Activated naive CD4-positive, alpha-beta T cell treated with anti-CD3 and anti-CD28 coated beads, Interleukin-2, amount 10 ng/mL, durations not matched to agents 7 days and 5 days (primary cell): ENCODE measurements at regions of chr4 and their contacts with region 1.

Region 1: GRCh38 chr4:16916719-16917337 is 18.4 kb upstream of the LDB2 start:
- DNase-seq: peak; percentile 86
- H3K4me3 Mint-ChIP-seq: no peak overlapping the region
- H3K27ac Mint-ChIP-seq: no peak overlapping the region
- H3K4me1 Mint-ChIP-seq: no peaks in the 10 kb centered on the region
- H3K27me3 Mint-ChIP-seq: no peaks in the 10 kb centered on the region

Region 2: DNA sequence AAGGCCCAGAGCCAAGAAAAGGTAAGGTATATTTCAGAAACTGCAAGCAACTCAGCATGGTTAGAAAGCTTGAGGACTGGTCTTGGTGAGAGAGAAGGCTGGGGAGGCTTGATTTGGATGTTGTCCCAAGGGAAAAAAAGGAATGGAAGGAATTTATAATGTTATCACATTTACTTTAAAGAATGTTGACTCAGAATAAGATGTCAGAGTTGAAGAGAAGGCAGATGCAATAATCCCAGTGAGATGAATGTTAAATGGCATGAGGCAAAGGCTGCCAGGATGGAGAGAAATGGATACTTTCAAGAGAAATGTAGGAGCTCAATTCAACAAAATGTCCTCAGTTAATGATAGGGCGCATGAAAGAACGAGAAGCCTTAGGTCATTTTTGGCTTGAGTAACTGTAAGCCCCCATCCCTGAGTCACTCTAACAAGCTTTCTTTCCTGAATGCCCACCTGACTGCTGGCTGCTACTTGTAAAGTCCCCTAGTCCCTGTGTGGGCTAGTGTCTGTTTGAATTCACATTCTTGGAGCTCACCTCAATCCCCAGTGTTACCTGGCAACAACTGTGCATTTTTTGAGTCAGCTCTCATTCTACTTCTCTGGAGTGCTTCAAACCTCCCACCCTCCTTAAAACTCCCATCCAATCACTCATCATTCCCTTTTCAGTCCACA is 587.6 kb before region 1 on chr4:
- CTCF ChIA-PET with region 1: no interaction called
- DNase-seq: no peak
- H3K4me3 Mint-ChIP-seq: no peak overlapping the region
- H3K27ac Mint-ChIP-seq: no peak overlapping the region
- H3K4me1 Mint-ChIP-seq: no peaks in the 10 kb centered on the region
- H3K27me3 Mint-ChIP-seq: no peaks in the 10 kb centered on the region

Region 3: GRCh38 chr4:16705341-16705740 is 211.5 kb before region 1 on chr4:
- CTCF ChIA-PET with region 1: no interaction called
- DNase-seq: no peak
- H3K4me3 Mint-ChIP-seq: no peak overlapping the region
- H3K27ac Mint-ChIP-seq: no peak overlapping the region
- H3K4me1 Mint-ChIP-seq: no peaks in the 10 kb centered on the region
- H3K27me3 Mint-ChIP-seq: no peaks in the 10 kb centered on the region

Region 4: DNA sequence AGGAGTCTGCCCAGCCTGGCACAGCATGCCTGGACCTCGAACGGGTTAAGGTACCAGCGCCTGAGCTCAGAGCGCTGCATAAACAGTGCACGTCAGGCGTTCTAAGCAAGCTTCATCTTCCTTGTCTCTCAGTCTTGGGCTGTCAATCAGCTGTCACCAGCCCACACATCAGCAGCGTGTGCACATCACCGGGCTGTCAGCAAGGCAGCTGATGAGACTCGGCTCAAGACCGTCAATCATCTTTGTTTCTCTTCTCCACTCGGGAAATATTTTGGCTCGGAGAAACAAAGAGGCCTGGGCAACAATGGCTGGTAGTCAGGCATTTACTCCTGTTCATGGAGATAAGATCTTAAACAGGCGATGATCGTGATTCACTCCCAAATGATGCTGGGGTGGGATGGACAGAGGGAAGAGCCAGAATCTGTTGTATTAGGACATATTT is 159.7 kb before region 1 on chr4:
- CTCF ChIA-PET with region 1: no interaction called
- DNase-seq: no peak
- H3K4me3 Mint-ChIP-seq: no peak overlapping the region
- H3K27ac Mint-ChIP-seq: no peak overlapping the region
- H3K4me1 Mint-ChIP-seq: no peaks in the 10 kb centered on the region
- H3K27me3 Mint-ChIP-seq: no peaks in the 10 kb centered on the region

Region 5: GRCh38 chr4:16794816-16795445 is 121.9 kb before region 1 on chr4:
- CTCF ChIA-PET with region 1: interaction called, 18 read pairs
- DNase-seq: peak; percentile 61
- H3K4me3 Mint-ChIP-seq: no peak overlapping the region
- H3K27ac Mint-ChIP-seq: no peak overlapping the region
- H3K4me1 Mint-ChIP-seq: no peaks in the 10 kb centered on the region
- H3K27me3 Mint-ChIP-seq: peaks cover 4% of the 10 kb centered on the region

Region 6: DNA sequence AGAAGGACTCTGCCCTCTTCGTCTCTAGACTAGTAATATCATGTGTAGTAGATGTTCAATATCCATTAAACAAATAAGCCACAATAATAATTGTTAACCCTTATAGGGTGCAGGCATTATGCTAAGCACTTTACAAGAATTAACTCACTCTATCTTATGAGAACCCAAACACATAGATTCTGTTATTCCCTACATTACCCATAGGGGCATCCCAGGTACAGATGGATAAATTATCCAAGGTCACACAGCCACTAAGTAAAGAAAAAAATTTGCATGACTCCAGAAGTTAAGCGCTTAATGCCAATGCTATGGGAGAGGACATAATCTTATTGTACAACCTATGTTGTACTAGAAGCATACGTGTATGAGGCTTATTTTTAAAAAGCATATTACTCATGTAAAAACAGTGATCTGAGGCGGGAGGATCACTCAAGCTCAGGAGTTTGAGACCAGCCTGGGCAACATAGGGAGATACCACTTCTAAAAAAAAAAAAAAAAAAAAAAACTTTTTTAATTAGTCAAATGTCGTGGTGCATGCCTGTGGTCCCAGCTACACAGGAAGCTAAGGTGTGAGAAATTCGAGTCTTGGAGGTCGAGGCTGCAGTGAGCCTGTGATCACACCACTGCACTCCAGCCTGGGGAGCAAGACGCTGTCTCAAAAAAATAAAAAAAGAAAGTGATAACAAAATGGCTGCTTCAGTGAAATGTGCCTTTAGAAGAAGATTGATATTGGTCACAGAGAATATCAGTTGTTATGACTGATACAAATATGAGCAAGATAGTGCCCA is 32.0 kb before region 1 on chr4:
- CTCF ChIA-PET with region 1: interaction called, 16 read pairs
- DNase-seq: no peak
- H3K4me3 Mint-ChIP-seq: no peak overlapping the region
- H3K27ac Mint-ChIP-seq: no peak overlapping the region
- H3K4me1 Mint-ChIP-seq: peaks cover 9% of the 10 kb centered on the region
- H3K27me3 Mint-ChIP-seq: peaks cover 4% of the 10 kb centered on the region

Region 7: DNA sequence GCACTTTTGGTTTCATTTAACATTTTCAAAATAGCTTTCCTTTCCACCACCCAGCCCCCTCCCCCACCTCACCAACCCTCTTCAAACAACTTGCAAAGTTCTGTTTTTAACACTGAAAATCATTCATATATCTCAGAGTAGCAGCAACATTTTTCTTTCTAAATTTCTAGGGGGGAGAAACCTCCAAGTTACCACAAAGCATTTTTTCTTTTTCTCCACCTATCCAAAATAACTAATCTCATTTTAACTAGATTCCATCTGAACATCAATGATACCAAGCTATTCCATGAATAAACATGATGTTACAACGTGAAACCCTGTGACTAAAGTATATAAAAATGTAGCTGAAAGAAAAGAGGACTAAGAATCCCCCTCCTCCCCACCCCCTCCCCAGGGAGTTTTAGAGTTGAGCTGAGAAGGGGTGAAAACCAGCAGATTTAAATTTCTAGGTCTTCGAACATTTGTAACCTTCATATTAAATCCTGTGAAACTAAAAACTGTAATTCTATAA is 23.6 kb before region 1 on chr4:
- CTCF ChIA-PET with region 1: interaction called, 10 read pairs
- DNase-seq: peak; percentile 34
- H3K4me3 Mint-ChIP-seq: peak overlapping the region; percentile 44
- H3K27ac Mint-ChIP-seq: peak overlapping the region; percentile 77
- H3K4me1 Mint-ChIP-seq: peaks cover 57% of the 10 kb centered on the region
- H3K27me3 Mint-ChIP-seq: peaks cover 21% of the 10 kb centered on the region

Region 8: GRCh38 chr4:17082186-17082585 is 165.4 kb after region 1 on chr4:
- CTCF ChIA-PET with region 1: no interaction called
- DNase-seq: no peak
- H3K4me3 Mint-ChIP-seq: no peak overlapping the region
- H3K27ac Mint-ChIP-seq: no peak overlapping the region
- H3K4me1 Mint-ChIP-seq: no peaks in the 10 kb centered on the region
- H3K27me3 Mint-ChIP-seq: no peaks in the 10 kb centered on the region

Region 9: GRCh38 chr4:17324386-17324830 is 407.6 kb after region 1 on chr4:
- CTCF ChIA-PET with region 1: interaction called, 27 read pairs
- DNase-seq: peak; percentile 56
- H3K4me3 Mint-ChIP-seq: no peak overlapping the region
- H3K27ac Mint-ChIP-seq: no peak overlapping the region
- H3K4me1 Mint-ChIP-seq: peaks cover 9% of the 10 kb centered on the region
- H3K27me3 Mint-ChIP-seq: peaks cover 23% of the 10 kb centered on the region

Region 10: GRCh38 chr4:17447675-17448298 is 531.0 kb after region 1 on chr4:
- CTCF ChIA-PET with region 1: interaction called, 18 read pairs
- DNase-seq: peak; percentile 74
- H3K4me3 Mint-ChIP-seq: no peak overlapping the region
- H3K27ac Mint-ChIP-seq: no peak overlapping the region
- H3K4me1 Mint-ChIP-seq: no peaks in the 10 kb centered on the region
- H3K27me3 Mint-ChIP-seq: peaks cover 7% of the 10 kb centered on the region